Activated B cell treated with CpG ODN at 0.5 μM for 24 hours (primary cell): ENCODE measurements at regions of chr9 and their contacts with region 1.

Region 1: GRCh38 chr9:131277910-131278701 is 1.8 kb upstream of the FAM78A start:
- DNase-seq: peak; percentile 48
- ATAC-seq: peak; percentile 48
- H3K4me3 Mint-ChIP-seq: peak overlapping the region; percentile 91
- H3K27ac Mint-ChIP-seq: peak overlapping the region; percentile 80
- H3K4me1 Mint-ChIP-seq: peaks cover 37% of the 10 kb centered on the region
- H3K27me3 Mint-ChIP-seq: peaks cover 12% of the 10 kb centered on the region
- CTCF ChIP-seq: no peak

Region 2: DNA sequence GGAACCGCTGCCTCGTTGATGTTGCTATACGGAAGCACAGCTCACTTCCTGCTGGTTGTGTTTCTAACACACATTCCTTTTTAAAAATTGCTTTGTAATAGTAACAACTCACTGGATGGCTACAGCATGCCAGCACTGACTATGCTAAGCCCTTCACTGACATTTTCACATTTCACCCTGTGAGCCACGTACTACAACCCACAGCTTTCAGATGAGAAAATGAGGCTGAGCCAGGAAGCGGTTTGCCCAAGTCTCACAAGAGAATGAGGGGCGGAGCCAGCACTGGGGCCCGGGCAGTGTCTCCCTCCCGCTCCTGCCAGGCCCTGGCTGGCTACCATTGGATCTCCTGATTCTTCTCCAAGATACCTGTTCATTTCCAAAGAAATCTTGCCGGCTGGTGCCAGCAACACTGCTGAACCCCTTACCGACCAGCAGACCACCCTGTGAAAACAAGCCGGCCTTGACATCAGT is 40.1 kb before region 1 on chr9:
- CTCF ChIA-PET with region 1: interaction called, 5 read pairs
- POLR2A ChIA-PET with region 1: interaction called, 34 read pairs
- intact Hi-C with region 1: loop called (anchors 1 kb)
- DNase-seq: peak; percentile 58
- ATAC-seq: peak; percentile 97
- H3K4me3 Mint-ChIP-seq: peak overlapping the region; percentile 87
- H3K27ac Mint-ChIP-seq: peak overlapping the region; percentile 96
- H3K4me1 Mint-ChIP-seq: peaks cover 17% of the 10 kb centered on the region
- H3K27me3 Mint-ChIP-seq: no peaks in the 10 kb centered on the region
- CTCF ChIP-seq: no peak

Region 3: DNA sequence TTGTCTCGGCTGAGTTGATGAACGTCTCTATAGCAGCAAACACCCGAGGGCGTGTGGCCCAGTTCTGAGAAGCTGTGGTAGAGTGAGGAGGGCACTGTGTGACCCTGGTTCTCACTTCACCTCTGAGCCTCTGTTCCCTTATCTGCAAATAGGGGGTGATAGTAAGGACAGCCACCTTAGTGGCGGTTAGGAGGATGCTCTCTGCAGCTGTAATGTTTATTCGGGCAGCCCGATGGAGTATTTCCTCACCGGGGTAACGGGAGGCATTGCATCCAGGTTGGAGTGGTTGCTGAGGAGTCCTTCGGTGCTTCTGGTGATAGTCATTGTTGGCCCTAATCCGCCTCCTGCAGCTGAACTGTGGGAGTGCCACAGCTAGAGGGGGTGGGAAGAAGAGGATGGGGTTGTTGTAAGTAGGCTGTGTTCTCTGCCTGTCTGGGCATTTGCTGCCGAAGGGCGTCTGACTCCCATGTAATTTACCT is 129.7 kb after region 1 on chr9:
- CTCF ChIA-PET with region 1: no interaction called
- POLR2A ChIA-PET with region 1: no interaction called
- intact Hi-C with region 1: no loop called
- DNase-seq: no peak
- ATAC-seq: peak; percentile 22
- H3K4me3 Mint-ChIP-seq: peak overlapping the region; percentile 16
- H3K27ac Mint-ChIP-seq: peak overlapping the region; percentile 24
- H3K4me1 Mint-ChIP-seq: peaks cover 88% of the 10 kb centered on the region
- H3K27me3 Mint-ChIP-seq: no peaks in the 10 kb centered on the region
- CTCF ChIP-seq: no peak

Region 4: DNA sequence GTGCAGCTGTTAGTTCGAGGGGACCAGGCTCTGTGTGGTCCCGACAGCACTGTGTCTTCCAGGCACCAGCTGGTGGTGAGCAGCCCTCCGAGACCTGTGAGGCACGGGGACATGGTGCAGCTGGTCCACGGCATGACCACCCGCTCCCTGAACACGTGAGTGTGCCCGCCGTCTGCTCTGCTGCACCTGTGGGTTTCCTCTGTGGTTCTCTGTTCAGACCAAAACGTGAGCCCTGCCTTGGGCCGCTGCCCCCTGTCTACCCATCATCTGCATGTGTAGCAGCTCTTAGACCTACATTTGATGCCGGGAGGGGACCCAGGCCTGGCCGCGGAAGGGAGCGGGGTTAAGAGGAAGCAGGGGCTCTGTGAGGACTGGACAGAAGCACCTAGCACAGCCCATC is 235.1 kb after region 1 on chr9:
- CTCF ChIA-PET with region 1: no interaction called
- POLR2A ChIA-PET with region 1: no interaction called
- intact Hi-C with region 1: no loop called
- DNase-seq: no peak
- ATAC-seq: no peak
- H3K4me3 Mint-ChIP-seq: no peak overlapping the region
- H3K27ac Mint-ChIP-seq: no peak overlapping the region
- H3K4me1 Mint-ChIP-seq: peaks cover 5% of the 10 kb centered on the region
- H3K27me3 Mint-ChIP-seq: no peaks in the 10 kb centered on the region
- CTCF ChIP-seq: no peak